Colonic mucosa (tissue), 4 donors: ENCODE measurements at regions of chr1 and their contacts with region 1.

Region 1: GRCh38 chr1:6245086-6245868 is 1.3 kb downstream of the HES3 start:
- DNase-seq: peak; percentile 79
- H3K4me3 ChIP-seq: peak overlapping the region; percentile 3
- H3K27ac ChIP-seq: no peak overlapping the region
- H3K4me1 ChIP-seq: peaks cover 23% of the 10 kb centered on the region
- H3K27me3 ChIP-seq: peaks cover 75% of the 10 kb centered on the region
- CTCF ChIP-seq: peak; percentile 65

Region 2: DNA sequence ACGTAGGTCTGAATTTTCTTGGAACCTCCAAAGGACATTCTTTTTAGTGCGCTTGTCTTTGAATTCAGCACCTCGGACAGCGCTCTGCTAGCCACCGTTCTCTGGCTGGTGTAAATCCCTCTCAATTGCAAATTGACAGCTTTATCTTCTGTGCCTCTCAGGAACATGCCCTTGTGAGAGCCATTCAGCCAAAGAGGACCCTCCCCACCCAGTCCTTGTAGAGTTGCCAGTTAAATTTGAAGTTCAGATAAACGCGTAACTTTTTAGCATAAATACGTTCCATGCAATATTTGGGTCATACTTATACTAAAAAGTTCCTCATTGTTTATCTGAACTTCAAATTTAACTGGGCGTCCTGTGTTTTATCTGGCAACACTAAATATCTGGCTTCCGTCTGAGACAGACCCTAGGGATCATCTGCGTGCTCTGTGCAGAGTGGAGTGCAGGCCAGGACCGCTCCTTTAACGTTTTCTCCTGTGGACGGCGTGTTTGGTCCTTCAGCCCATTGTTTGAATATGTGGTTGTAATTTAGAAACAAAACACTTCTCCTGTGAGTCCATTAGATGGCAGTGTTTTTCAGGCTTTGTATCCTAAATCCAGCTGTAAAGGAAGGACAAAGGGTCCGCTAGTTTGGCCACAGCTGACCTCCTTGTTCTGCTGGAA is 192.6 kb before region 1 on chr1:
- intact Hi-C with region 1: loop called (anchors 2 kb)
- DNase-seq: peak; percentile 52
- H3K4me3 ChIP-seq: no peak overlapping the region
- H3K27ac ChIP-seq: no peak overlapping the region
- H3K4me1 ChIP-seq: no peaks in the 10 kb centered on the region
- H3K27me3 ChIP-seq: no peaks in the 10 kb centered on the region
- CTCF ChIP-seq: peak; percentile 47

Region 3: GRCh38 chr1:6108937-6109614 is 136.2 kb before region 1 on chr1:
- intact Hi-C with region 1: loop called (anchors 2 kb)
- DNase-seq: no peak
- H3K4me3 ChIP-seq: no peak overlapping the region
- H3K27ac ChIP-seq: no peak overlapping the region
- H3K4me1 ChIP-seq: no peaks in the 10 kb centered on the region
- H3K27me3 ChIP-seq: no peaks in the 10 kb centered on the region
- CTCF ChIP-seq: peak; percentile 41

Region 4: GRCh38 chr1:6280761-6281451 is 35.6 kb after region 1 on chr1:
- intact Hi-C with region 1: loop called (anchors 5 kb)
- DNase-seq: no peak
- H3K4me3 ChIP-seq: no peak overlapping the region
- H3K27ac ChIP-seq: peak overlapping the region; percentile 45
- H3K4me1 ChIP-seq: peaks cover 20% of the 10 kb centered on the region
- H3K27me3 ChIP-seq: no peaks in the 10 kb centered on the region
- CTCF ChIP-seq: no peak

Region 5: GRCh38 chr1:6343506-6344405 is 98.5 kb after region 1 on chr1:
- intact Hi-C with region 1: loop called (anchors 2 kb)
- DNase-seq: peak; percentile 92
- H3K4me3 ChIP-seq: no peak overlapping the region
- H3K27ac ChIP-seq: peak overlapping the region; percentile 22
- H3K4me1 ChIP-seq: no peaks in the 10 kb centered on the region
- H3K27me3 ChIP-seq: no peaks in the 10 kb centered on the region
- CTCF ChIP-seq: peak; percentile 96

Region 6: DNA sequence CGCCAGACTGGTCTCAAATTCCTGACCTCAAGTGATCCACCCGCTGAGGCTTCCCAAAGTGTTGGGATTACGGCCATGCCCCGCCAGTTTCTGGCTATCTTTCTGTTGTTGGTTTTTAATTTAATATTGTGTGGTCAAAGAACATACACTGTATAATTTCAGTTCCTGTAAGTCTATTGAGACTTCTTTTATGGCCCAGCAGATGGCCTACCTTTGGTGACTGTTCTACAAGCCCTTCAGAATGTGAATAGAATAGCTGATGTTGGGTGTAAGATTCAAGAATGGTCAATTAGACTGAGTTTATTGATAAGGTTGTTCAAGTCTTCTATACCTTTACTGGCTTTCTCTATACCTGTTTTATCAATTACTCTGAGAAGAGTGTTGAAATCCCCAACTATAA is 163.8 kb after region 1 on chr1:
- intact Hi-C with region 1: loop called (anchors 5 kb)
- DNase-seq: no peak
- H3K4me3 ChIP-seq: no peak overlapping the region
- H3K27ac ChIP-seq: no peak overlapping the region
- H3K4me1 ChIP-seq: no peaks in the 10 kb centered on the region
- H3K27me3 ChIP-seq: no peaks in the 10 kb centered on the region
- CTCF ChIP-seq: no peak

Region 7: DNA sequence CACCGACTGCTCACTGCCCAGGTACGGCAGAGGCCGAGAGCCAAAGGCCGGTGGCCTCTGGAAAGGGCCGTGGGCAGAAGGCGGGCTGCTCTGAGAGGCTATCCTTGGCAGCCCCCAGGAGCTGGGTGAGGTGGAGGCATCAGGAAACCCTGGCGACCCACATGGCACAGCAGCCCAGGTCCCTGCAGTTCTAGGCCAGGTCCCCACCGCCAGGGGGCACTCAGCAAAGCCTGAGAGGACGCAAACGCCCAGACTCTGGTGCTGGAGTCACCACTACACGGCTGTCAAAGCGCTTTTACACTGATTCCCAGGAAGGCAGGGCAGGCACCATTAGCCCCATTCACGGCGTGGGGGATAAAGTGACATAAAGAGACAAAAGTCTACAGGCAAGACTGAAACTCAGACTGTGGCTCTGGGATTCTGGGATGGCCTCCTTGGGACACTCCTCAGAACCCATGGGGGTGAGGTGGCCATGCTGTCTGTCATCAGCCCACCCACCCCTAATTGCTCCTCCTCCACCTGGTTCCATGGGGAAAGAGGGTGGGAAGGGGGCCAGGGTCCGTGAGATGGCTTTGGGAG is 241.2 kb after region 1 on chr1:
- intact Hi-C with region 1: no loop called
- DNase-seq: peak; percentile 92
- H3K4me3 ChIP-seq: no peak overlapping the region
- H3K27ac ChIP-seq: no peak overlapping the region
- H3K4me1 ChIP-seq: peaks cover 16% of the 10 kb centered on the region
- H3K27me3 ChIP-seq: no peaks in the 10 kb centered on the region
- CTCF ChIP-seq: peak; percentile 92